ENCODE measurements at regions of chr7 and their contacts with region 1.

Region 1: DNA sequence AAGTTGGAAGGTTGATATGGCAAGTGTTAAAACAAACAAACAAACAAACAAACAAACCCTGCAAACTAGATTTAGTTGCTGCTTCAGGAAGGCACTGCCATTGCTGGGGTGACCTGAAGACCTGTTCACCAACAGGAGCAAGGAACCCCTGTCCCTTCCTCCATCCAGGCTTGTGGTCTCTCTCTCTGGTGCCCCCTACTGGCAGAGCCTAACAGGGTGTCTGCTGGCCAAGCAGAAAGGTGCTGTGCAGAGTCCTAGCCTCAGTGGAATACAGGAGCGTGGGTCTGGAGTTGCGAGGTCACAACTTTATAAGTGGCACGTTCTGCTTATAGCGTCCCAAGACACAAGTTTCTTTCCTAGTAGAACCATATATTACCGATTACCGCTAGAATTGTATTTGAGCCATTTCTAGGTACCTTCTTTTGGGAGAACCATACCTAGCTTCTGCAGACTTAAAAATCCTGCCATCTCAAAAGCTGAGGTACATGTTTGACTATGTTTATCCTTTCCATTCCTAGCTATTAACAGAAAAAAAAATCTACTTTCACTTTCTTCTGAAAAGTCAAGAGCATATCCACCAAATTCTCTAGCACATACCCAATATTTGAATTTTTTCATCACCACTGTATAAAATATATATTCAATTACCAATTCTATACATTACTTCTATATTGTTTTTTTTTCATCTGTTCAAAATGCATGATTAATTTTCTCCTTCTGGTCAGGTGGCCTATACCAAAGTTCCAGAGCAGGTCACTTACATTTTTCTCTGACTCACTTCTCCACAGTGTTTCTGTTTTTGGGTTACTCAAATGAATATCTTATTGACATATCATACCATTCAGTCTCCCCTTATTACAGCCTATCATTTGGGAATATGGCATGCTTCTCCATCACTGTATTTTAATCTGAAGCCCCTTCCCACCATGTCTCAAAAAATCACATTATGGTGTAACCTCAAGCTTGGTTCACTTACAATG is 29.1 kb upstream of the CALD1 start:
- DNase-seq: peak in 6 of 10 donors; percentile 11 to 58 (median 44)
- H3K4me3 ChIP-seq: no peak overlapping the region
- H3K27ac ChIP-seq: no peak overlapping the region
- H3K27me3 ChIP-seq: no peaks in the 10 kb centered on the region
- CTCF ChIP-seq: peak; percentile 32 to 83 (median 66)

Region 2: DNA sequence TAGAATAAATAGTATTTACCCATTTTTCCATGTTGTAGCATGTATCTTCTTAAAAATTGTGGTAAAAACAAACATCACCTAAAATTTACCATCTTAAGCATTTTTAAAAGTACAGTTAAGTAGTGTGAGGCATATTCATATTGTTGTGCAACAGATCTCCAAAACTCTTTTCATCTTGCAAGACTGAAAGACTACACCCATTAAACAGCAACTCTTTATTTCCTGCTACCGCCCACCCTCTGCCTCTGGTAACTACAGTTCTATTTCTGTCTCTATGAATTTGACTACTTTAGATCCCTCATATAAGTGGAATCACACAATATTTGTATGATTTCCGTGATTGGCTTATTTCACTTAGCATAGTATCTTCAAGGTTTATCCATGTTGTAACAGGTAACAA is 195.9 kb after region 1 on chr7:
- intact Hi-C with region 1: loop called (anchors 5 to 10 kb)
- DNase-seq: no peak
- H3K4me3 ChIP-seq: no peak overlapping the region
- H3K27ac ChIP-seq: peak overlapping the region in 1 of 59 donors; percentile 2
- H3K27me3 ChIP-seq: no peaks in the 10 kb centered on the region
- CTCF ChIP-seq: no peak

Region 3: DNA sequence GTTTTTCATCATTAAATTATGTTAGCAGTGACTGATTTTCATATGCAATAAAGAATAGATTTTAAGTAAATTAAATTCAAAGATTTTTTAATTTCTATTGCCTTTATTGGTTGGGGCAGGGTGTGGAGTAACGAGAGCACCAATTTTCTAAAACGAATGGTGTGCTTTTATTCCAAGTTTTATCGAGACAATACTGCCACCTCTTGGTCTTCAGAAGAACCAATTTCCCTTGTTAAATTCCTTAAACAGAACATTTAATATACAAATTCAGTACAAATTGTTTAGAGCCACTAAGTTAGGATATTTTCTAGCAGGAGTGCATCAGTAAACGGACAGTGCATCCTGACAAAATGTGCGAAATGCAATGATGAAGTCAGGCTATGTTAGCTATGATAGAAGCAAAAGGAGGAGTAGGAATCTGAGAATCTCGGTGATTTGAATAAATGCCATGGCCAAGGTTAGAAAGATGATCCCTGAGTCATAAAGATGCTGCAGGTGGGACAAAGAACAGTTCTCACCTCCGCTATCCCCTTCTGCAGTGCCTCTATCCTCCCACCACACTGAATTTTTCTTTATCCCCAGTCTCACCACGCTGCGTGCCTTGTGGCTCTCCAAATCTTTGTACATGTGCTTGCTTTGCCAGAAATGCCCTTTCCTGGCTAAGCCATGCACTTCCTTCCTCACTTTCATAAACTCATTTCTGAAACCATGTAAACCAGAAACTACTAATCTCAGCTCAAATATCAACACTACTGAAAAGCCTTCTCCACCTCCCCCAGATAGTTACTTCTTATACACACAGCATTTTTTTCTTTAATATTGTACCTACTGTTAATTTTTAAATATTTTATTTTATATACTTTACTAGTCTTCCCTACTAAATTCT is 204.1 kb after region 1 on chr7:
- intact Hi-C with region 1: loop called (anchors 5 to 10 kb)
- DNase-seq: no peak
- H3K4me3 ChIP-seq: no peak overlapping the region
- H3K27ac ChIP-seq: peak overlapping the region in 7 of 59 donors; percentile 6 to 49 (median 21)
- H3K27me3 ChIP-seq: no peaks in the 10 kb centered on the region
- CTCF ChIP-seq: peak; percentile 55 to 85 (median 74)